H1 (cell line): ENCODE measurements at regions of chr1 and their contacts with region 1.

Region 1: GRCh38 chr1:170929835-170930554 is 5.3 kb upstream of the MROH9 start:
- DNase-seq: peak in 1 of 2 experiments; percentile 29
- H3K4me3 ChIP-seq: no peak overlapping the region
- H3K27ac ChIP-seq: no peak overlapping the region
- H3K4me1 ChIP-seq: peaks cover 0 to 4% (median 1%) of the 10 kb centered on the region in 4 experiments; a peak in 2 of 7 replicates
- H3K27me3 ChIP-seq: no peaks in the 10 kb centered on the region
- CTCF ChIP-seq: peak; percentile 19 to 73 (median 67)
- EP300 ChIP-seq: no peak
- POLR2A ChIP-seq: no peak
- RAD21 ChIP-seq: peak; percentile 76 to 81

Region 2: GRCh38 chr1:170836141-170836540 is 93.9 kb before region 1 on chr1:
- CTCF ChIA-PET with region 1: no interaction called
- POLR2A ChIA-PET with region 1: no interaction called
- DNase-seq: no peak
- H3K4me3 ChIP-seq: no peak overlapping the region
- H3K27ac ChIP-seq: no peak overlapping the region
- H3K4me1 ChIP-seq: no peaks in the 10 kb centered on the region
- H3K27me3 ChIP-seq: no peaks in the 10 kb centered on the region
- CTCF ChIP-seq: no peak
- EP300 ChIP-seq: no peak
- POLR2A ChIP-seq: no peak
- RAD21 ChIP-seq: no peak

Region 3: DNA sequence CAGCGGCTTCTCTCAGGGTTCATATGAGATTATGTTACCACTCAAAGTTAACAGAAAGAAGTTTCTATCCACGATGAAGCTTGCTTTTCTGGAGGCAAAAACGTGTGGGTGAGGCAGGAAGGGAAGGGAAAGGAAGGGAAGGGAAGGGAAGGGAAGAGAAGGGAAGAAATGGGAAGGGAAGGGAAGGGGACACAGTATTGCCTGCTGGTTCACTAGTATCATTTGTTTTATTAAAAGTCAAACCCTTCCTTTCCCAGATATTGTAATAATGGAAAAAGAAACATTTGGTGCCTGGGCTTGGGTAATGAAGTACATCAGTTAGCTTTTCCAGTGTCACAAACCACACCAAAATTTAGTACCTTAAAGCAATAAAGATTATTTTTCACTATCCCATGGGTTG is 12.6 kb before region 1 on chr1:
- CTCF ChIA-PET with region 1: interaction called, 21 read pairs
- POLR2A ChIA-PET with region 1: no interaction called
- DNase-seq: no peak
- H3K4me3 ChIP-seq: no peak overlapping the region
- H3K27ac ChIP-seq: no peak overlapping the region
- H3K4me1 ChIP-seq: no peaks in the 10 kb centered on the region
- H3K27me3 ChIP-seq: no peaks in the 10 kb centered on the region
- CTCF ChIP-seq: no peak
- EP300 ChIP-seq: no peak
- POLR2A ChIP-seq: no peak
- RAD21 ChIP-seq: no peak

Region 4: GRCh38 chr1:170986901-170987300 is 56.9 kb after region 1 on chr1:
- CTCF ChIA-PET with region 1: no interaction called
- POLR2A ChIA-PET with region 1: no interaction called
- DNase-seq: no peak
- H3K4me3 ChIP-seq: no peak overlapping the region
- H3K27ac ChIP-seq: no peak overlapping the region
- H3K4me1 ChIP-seq: no peaks in the 10 kb centered on the region
- H3K27me3 ChIP-seq: no peaks in the 10 kb centered on the region
- CTCF ChIP-seq: no peak
- EP300 ChIP-seq: no peak
- POLR2A ChIP-seq: no peak
- RAD21 ChIP-seq: no peak